A549 (cell line): ENCODE measurements at regions of chr3 and their contacts with region 1.

Region 1: GRCh38 chr3:187738331-187739093 is 6.8 kb downstream of the BCL6 start:
- DNase-seq: peak; percentile 85 to 87
- ATAC-seq: peak; percentile 65 to 68
- H3K4me3 ChIP-seq: peak overlapping the region; percentile 60
- H3K27ac ChIP-seq: peak overlapping the region; percentile 68 to 84
- H3K4me1 ChIP-seq: peaks cover 38% of the 10 kb centered on the region
- CTCF ChIP-seq: peak; percentile 71
- EP300 ChIP-seq: no peak
- POLR2A ChIP-seq: peak; percentile 24; the same call in 1 of the 2 replicates
- RAD21 ChIP-seq: peak; percentile 86 to 87

Region 2: DNA sequence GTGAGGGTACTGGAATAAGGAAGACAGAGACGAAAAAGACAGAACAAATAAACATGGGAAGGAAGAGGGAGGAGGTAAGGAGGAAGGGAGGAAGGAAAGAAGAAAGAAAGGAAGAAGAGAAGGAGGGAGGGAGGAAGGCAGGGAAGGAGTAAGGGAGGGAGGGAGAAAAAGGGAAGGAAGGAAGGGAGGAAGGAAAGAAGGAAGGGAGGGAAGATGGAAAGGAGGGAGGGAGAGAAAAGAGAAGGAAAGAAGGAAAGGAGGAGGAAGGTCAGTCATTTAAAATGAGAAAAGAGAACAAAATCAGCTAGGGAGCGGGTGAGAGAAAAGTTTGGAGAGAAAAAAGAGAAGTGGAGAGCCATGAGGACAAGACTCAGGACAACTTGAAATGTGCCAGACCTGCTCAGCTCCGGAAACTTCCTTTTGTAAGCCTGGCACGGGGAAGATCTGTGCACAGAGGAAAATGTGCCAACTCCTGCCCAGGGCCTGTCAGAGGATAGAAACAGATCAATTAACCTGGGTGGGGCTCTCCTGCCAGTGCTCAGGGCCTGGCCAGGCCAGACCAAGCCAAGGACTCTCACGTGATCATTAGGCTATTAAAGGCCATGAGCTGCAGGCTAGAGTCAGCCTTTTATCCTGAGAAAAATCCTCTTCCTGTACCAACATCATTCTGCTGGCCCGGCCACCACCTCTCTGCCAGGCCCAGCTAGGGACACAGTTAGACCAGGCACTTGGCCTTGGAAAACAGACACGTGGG is 56.9 kb after region 1 on chr3:
- CTCF ChIA-PET with region 1: no interaction called
- POLR2A ChIA-PET with region 1: no interaction called
- DNase-seq: no peak
- ATAC-seq: no peak
- H3K4me3 ChIP-seq: no peak overlapping the region
- H3K27ac ChIP-seq: no peak overlapping the region
- H3K4me1 ChIP-seq: no peaks in the 10 kb centered on the region
- CTCF ChIP-seq: no peak
- EP300 ChIP-seq: no peak
- POLR2A ChIP-seq: no peak
- RAD21 ChIP-seq: no peak

Region 3: DNA sequence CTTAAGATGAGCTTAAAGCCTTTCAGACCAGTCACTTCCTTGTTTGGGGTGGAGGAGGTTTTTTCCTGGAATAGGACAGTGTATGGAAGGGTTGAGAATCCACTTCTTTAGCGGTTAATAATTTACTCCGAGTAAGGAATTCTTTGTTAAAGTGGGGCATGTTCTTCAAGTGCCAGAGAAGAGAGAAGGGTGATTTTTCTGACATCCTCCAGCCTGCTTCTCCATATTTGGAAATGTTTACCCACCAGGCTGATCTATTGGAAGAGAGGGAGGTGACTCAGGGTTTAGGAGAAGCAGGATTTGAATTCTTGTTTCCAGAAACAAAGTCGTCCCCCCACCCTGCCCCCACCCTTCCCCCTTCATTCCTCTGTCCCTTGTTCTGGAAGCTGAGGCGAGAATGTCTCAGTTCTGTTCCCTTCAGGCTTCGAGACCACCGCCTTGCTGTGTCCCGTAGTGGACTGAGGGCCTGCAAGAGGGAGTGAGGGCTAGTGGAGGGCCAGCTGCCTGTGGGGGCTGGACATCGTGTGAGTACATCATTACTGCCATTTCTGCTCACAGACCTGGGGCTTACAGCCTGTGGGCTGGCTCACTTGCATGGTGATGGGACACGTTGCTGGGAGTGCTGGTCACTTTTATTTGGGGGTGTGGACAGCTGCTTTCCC is 473.9 kb after region 1 on chr3:
- CTCF ChIA-PET with region 1: interaction called, 13 read pairs
- POLR2A ChIA-PET with region 1: no interaction called
- DNase-seq: peak; percentile 83 to 94
- ATAC-seq: peak; percentile 88 to 92
- H3K4me3 ChIP-seq: peak overlapping the region; percentile 39
- H3K27ac ChIP-seq: peak overlapping the region; percentile 98 to 99
- H3K4me1 ChIP-seq: peaks cover 77% of the 10 kb centered on the region
- CTCF ChIP-seq: no peak
- EP300 ChIP-seq: 0 out of 5 replicates have a peak, but pooled peaks of 1 of the 2 experiments have one; percentile 34
- POLR2A ChIP-seq: no peak
- RAD21 ChIP-seq: 0 out of 5 replicates have a peak, but pooled peaks of 1 of the 2 experiments have one; percentile 17

Region 4: DNA sequence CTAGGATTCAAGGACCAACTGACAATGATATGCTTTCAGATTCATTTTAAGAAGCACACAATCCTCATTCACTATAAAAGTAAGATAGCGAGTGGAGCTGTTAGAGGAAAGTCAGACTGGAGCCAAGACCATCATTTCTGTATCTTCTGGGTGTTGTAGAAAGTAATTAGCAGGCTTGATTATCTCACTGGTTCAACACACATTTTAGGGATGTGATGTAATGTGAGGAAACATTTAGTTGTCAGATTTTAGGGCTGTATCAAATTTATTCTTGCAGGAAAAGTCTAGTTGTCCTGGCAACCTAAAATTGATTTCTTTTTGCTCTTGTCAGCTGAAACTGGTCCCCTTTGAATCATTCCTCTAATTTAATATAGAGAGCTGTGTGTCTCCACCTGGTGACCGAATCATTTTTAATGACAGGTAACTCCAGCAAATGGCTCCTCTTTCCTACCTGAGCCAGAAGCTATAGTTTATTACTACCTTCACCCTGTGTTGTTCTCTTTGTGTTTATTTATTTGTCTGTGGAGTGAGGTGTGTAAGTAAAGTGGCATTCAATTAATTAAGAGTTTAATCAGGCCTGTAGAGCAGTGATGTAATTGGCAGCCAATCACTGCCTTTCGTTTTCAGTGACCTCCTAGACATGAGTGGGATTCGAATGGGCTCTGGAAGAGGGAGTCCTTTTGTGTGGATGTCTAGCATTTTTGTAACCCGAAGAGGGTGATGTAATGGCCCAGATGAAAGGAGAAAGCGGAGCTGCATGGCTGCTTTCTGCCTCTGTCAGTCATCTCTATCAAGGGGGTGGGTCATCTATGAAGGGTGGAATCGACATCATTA is 541.2 kb after region 1 on chr3:
- CTCF ChIA-PET with region 1: interaction called, 19 read pairs
- POLR2A ChIA-PET with region 1: no interaction called
- DNase-seq: no peak
- ATAC-seq: no peak
- H3K4me3 ChIP-seq: no peak overlapping the region
- H3K27ac ChIP-seq: peak overlapping the region; percentile 37 to 65; a peak in 4 of 6 replicates
- H3K4me1 ChIP-seq: peaks cover 72% of the 10 kb centered on the region
- CTCF ChIP-seq: no peak
- EP300 ChIP-seq: no peak
- POLR2A ChIP-seq: no peak
- RAD21 ChIP-seq: no peak

Region 5: DNA sequence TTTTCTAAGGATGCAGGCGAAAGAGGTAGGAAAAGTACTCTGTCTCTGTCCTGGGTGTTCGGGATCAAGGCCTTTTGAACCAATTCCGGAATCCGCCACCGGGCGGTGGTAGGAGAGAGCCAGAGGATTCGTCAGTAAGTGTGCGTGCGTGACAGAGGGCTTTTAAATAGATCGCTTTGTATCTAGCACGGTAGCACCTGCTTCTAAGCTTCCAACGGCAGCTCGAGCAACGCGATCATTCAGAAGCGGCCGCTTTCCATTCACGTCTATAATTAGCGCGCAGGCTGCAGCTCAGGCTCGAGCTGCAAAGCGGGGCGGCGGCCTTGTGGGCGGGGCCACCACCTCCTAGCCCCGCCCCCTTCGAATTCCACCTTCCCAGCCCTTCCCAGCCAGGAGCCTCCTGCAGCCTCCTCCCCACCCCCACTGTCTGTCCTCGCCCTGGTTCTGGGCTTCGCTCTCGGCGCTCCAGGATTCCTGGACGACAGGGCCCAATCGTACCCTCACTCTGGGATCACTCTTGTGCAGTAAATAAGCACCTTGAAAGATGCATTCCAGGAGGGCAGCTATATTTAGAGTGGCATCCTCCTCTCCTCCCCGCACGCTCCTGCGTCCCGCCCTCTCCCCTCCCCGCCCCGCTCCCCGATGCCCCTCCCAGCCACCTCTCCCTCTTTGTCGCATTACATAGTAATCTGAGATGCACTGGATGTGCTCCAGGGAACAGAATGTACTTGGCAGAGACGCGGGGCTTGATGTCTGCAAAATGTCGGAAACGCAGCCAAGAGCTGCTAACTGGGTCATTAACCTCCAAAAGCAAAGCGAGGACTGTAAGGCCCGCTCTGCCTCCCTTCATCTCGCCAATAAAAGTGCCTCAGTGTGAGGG is 1209.1 kb after region 1 on chr3:
- CTCF ChIA-PET with region 1: interaction called, 221 read pairs
- POLR2A ChIA-PET with region 1: interaction called, 9 read pairs
- DNase-seq: peak; percentile 86 to 87
- ATAC-seq: peak; percentile 86 to 88
- H3K4me3 ChIP-seq: peak overlapping the region; percentile 43
- H3K27ac ChIP-seq: peak overlapping the region; percentile 93 to 98
- H3K4me1 ChIP-seq: peaks cover 43% of the 10 kb centered on the region
- CTCF ChIP-seq: peak; percentile 33; the same call in 2 of the 3 replicates
- EP300 ChIP-seq: no peak
- POLR2A ChIP-seq: peak; percentile 38; the same call in 1 of the 2 replicates
- RAD21 ChIP-seq: peak; percentile 18 to 30; a peak in 2 of 5 replicates

Region 6: GRCh38 chr3:189139611-189139940 is 1401.1 kb after region 1 on chr3:
- CTCF ChIA-PET with region 1: interaction called, 40 read pairs
- POLR2A ChIA-PET with region 1: no interaction called
- DNase-seq: no peak
- ATAC-seq: no peak
- H3K4me3 ChIP-seq: no peak overlapping the region
- H3K27ac ChIP-seq: no peak overlapping the region
- H3K4me1 ChIP-seq: no peaks in the 10 kb centered on the region
- CTCF ChIP-seq: no peak
- EP300 ChIP-seq: no peak
- POLR2A ChIP-seq: no peak
- RAD21 ChIP-seq: no peak